ENCODE measurements at regions of chr5 and their contacts with region 1.

Region 1: GRCh38 chr5:152956943-152957613 is 533.4 kb upstream of the GRIA1 start:
- DNase-seq: no peak
- ATAC-seq: no peak
- H3K4me3 ChIP-seq: no peak overlapping the region
- H3K27ac ChIP-seq: no peak overlapping the region
- H3K4me1 ChIP-seq: no peaks in the 10 kb centered on the region
- H3K27me3 ChIP-seq: no peaks in the 10 kb centered on the region
- CTCF ChIP-seq: no peak

Region 2: GRCh38 chr5:152938630-152939029 is 18.4 kb before region 1 on chr5:
- intact Hi-C with region 1: loop called in 1 of 10 experiments (anchors 2 kb)
- DNase-seq: no peak
- ATAC-seq: no peak
- H3K4me3 ChIP-seq: no peak overlapping the region
- H3K27ac ChIP-seq: no peak overlapping the region
- H3K4me1 ChIP-seq: no peaks in the 10 kb centered on the region
- H3K27me3 ChIP-seq: no peaks in the 10 kb centered on the region
- CTCF ChIP-seq: no peak

Region 3: GRCh38 chr5:153952893-153953292 is 995.8 kb after region 1 on chr5:
- intact Hi-C with region 1: no loop called
- DNase-seq: no peak
- ATAC-seq: peak in 5 of 8 donors; percentile 27 to 62 (median 46)
- H3K4me3 ChIP-seq: no peak overlapping the region
- H3K27ac ChIP-seq: peak overlapping the region in 2 of 10 donors; percentile 9 to 30
- H3K4me1 ChIP-seq: no peaks in the 10 kb centered on the region
- H3K27me3 ChIP-seq: no peaks in the 10 kb centered on the region
- CTCF ChIP-seq: no peak

Measured in heart right ventricle (tissue), 16 donors.